ENCODE measurements at regions of chr1 and their contacts with region 1.

Region 1: GRCh38 chr1:205121660-205122488 is at the start of gene RBBP5:
- DNase-seq: peak; percentile 98
- H3K4me3 ChIP-seq: peak within 1 kb of the TSS; percentile 55 to 91 (median 86)
- H3K27ac ChIP-seq: peak within 1 kb of the TSS; percentile 90 to 99 (median 94)
- H3K4me1 ChIP-seq: peaks cover 25 to 67% (median 42%) of the 10 kb centered on the region in 6 donors
- H3K27me3 ChIP-seq: no peaks in the 10 kb centered on the region
- CTCF ChIP-seq: peak in 10 of 11 experiments; percentile 18 to 71 (median 65)
- POLR2A ChIP-seq: peak; percentile 47 to 87 (median 75)
- total RNA-seq, gene RBBP5: 16.7 to 23.4 (median 18.3) TPM

Region 2: GRCh38 chr1:204961765-204962419 is 160.0 kb before region 1 on chr1:
- intact Hi-C with region 1: no loop called
- DNase-seq: no peak
- H3K4me3 ChIP-seq: no peak overlapping the region
- H3K27ac ChIP-seq: no peak overlapping the region
- H3K4me1 ChIP-seq: peaks cover 0 to 18% (median 9%) of the 10 kb centered on the region in 6 donors
- H3K27me3 ChIP-seq: peaks cover 0 to 13% (median 0%) of the 10 kb centered on the region in 7 donors
- CTCF ChIP-seq: no peak
- POLR2A ChIP-seq: no peak

Region 3: DNA sequence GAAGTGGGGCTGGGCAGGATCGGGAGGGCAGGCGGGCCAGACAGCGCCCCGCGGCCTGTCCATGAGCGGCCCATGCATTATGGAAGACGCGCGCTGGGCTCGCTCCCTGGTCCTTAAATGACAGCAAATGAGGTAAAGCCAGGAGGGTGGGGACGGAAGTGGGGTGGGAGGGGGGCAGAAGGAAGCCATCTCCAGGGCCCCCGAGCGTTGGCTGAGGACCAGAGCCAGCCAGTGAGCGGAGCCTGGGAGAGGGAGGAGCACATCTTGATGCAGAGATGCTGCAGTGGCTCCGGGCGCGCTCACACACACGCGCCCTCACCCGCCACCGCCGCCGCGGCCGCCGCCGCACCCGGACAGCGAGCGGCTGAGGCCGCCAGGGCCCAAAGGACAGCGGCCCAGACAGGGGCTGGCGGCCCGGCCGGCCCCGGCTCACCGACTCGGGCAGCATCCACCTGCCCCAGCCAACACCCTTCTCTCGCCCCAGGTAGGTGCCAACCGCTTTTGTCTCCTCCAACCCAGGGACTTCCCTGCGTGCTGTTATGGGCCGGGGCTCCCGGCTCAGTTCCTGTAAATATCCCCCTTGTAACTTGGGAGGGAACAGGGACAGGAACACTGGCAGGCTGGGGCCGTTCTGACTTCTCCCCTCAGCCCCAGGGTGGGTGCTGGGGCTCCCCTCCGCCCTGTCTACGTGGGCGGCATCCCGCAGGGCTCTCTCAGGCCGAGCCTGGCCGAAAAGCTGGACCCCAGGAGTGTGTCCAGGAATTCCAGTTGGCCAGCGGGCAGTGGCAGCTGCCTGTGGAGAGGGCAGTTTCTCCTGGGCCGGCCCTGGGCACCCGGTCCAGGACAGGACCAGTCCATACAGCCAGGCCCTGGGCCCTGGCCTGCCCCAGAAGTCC is 78.7 kb before region 1 on chr1 and contains the start of gene CNTN2:
- intact Hi-C with region 1: no loop called
- DNase-seq: no peak
- H3K4me3 ChIP-seq: peak within 1 kb of the TSS in 1 of 8 donors; percentile 21
- H3K27ac ChIP-seq: no peak within 1 kb of the TSS
- H3K4me1 ChIP-seq: peaks cover 0 to 13% (median 8%) of the 10 kb centered on the region in 6 donors
- H3K27me3 ChIP-seq: peaks cover 0 to 72% (median 30%) of the 10 kb centered on the region in 7 donors
- CTCF ChIP-seq: no peak
- POLR2A ChIP-seq: no peak
- total RNA-seq, gene CNTN2: 0.06 to 2.6 (median 0.27) TPM in 4 of 7 donors, not detected in the others

Region 4: DNA sequence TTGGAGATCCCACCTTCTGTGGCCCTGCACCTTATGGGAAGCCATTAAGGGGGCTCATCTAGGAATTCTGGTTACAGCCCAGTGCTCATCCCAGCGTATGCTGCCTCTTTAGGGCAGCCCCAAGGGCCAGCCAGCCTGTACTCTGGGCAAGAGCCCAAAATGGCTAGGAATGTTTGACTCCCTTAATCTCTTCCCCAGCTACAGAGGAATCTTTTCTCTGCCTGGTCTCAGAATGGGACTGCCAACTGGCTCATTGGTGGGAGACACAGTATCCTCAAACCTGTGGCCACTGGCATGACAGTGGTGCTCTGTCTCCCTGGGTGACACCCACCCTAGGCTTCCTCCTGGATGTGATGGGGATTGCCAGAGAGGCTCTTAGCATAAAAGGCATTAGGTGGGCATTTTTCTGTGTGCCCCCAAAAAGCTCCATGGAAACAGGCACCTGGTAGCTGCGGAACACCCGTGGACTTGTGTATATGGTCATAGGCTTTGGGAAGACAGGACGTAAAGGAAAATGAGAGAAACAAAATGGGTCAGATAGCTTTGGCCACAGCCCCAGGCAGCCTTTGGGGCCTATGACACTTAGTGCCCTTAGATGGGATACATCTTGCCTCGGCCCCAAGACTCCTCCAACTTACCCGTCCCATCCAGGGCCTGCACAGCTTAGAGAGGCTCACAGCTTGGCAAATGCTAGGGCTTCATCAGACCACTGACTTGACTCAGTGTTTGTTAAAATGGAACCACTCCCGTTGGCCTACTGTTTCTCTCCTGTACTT is 44.5 kb before region 1 on chr1:
- intact Hi-C with region 1: no loop called
- DNase-seq: no peak
- H3K4me3 ChIP-seq: no peak overlapping the region
- H3K27ac ChIP-seq: no peak overlapping the region
- H3K4me1 ChIP-seq: no peaks in the 10 kb centered on the region
- H3K27me3 ChIP-seq: no peaks in the 10 kb centered on the region
- CTCF ChIP-seq: no peak
- POLR2A ChIP-seq: no peak

Region 5: GRCh38 chr1:205227584-205228006 is 105.7 kb after region 1 on chr1 and contains the start of gene TMCC2:
- intact Hi-C with region 1: loop called (anchors 10 kb)
- DNase-seq: peak; percentile 94
- H3K4me3 ChIP-seq: peak within 1 kb of the TSS; percentile 50 to 84 (median 58)
- H3K27ac ChIP-seq: peak within 1 kb of the TSS in 3 of 8 donors; percentile 19 to 43 (median 38)
- H3K4me1 ChIP-seq: peaks cover 12 to 43% (median 30%) of the 10 kb centered on the region in 6 donors
- H3K27me3 ChIP-seq: peaks cover 0 to 37% (median 0%) of the 10 kb centered on the region in 7 donors
- CTCF ChIP-seq: peak in 2 of 11 experiments; percentile 14 to 31
- POLR2A ChIP-seq: no peak
- total RNA-seq, gene TMCC2: 2.9 to 146 (median 11.3) TPM

Measured in spleen (tissue), 13 donors.